Transverse colon (tissue), 4 donors: ENCODE measurements at regions of chr10 and their contacts with region 1.

Region 1: DNA sequence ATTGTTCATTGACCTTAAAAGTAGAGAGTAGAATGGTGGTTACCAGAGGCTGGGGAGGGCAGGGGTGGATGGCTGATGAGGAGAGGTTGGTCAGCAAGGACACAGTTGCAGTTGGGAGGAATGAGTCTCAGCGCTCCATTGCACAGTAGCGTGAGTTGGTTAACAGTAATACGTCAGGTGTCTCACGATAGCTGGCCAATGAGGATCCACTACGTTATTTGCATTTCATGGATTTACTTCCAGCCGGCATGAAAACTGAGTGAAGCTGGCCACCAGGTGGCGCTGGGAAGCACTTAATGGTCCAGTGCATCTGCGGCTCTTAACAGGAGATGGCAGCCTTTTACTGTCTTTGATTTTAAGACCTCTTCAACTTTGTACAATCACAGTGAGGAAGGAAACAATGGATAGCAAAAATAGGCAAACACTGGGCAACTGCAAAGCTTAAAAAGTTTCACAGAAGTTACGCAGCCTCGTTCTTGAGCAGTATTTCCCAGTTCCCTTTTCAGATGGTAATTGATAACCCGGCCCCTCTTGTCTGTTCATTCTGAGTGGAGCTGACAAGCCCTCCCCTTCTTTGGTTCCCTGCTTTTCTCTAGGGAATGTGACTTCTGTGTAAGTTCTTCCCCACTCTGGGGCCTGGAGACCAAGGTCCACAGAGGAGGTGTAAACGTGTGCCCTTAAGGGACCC is 23.7 kb downstream of the AKR1E2 start:
- DNase-seq: peak; percentile 93
- H3K4me3 ChIP-seq: no peak overlapping the region
- H3K27ac ChIP-seq: peak overlapping the region in 1 of 4 donors; percentile 8
- H3K4me1 ChIP-seq: peaks cover 0 to 8% (median 0%) of the 10 kb centered on the region in 4 donors
- H3K27me3 ChIP-seq: no peaks in the 10 kb centered on the region
- CTCF ChIP-seq: peak; percentile 94 to 100 (median 97)
- EP300 ChIP-seq: no peak
- POLR2A ChIP-seq: no peak

Region 2: GRCh38 chr10:5094265-5095205 is 244.8 kb after region 1 on chr10 and contains the start of gene AKR1C3:
- in situ Hi-C with region 1: loop called in 3 of 4 experiments (anchors 10 to 25 kb)
- intact Hi-C with region 1: loop called (anchors 5 kb)
- DNase-seq: no peak
- H3K4me3 ChIP-seq: peak within 1 kb of the TSS; percentile 13 to 59 (median 37)
- H3K27ac ChIP-seq: peak within 1 kb of the TSS; percentile 69 to 76 (median 74)
- H3K4me1 ChIP-seq: peaks cover 0 to 9% (median 0%) of the 10 kb centered on the region in 4 donors
- H3K27me3 ChIP-seq: no peaks in the 10 kb centered on the region
- CTCF ChIP-seq: peak; percentile 58 to 90 (median 69)
- EP300 ChIP-seq: no peak
- POLR2A ChIP-seq: peak; percentile 57
- total RNA-seq, gene AKR1C3: 164 to 634 (median 415) TPM

Region 3: GRCh38 chr10:5305374-5305773 is 455.7 kb after region 1 on chr10:
- in situ Hi-C with region 1: loop called in 1 of 4 experiments (anchors 10 kb)
- intact Hi-C with region 1: no loop called
- DNase-seq: no peak
- H3K4me3 ChIP-seq: no peak overlapping the region
- H3K27ac ChIP-seq: no peak overlapping the region
- H3K4me1 ChIP-seq: no peaks in the 10 kb centered on the region
- H3K27me3 ChIP-seq: no peaks in the 10 kb centered on the region
- CTCF ChIP-seq: no peak
- EP300 ChIP-seq: no peak
- POLR2A ChIP-seq: no peak

Region 4: GRCh38 chr10:5396556-5397300 is 547.0 kb after region 1 on chr10:
- in situ Hi-C with region 1: loop called in 1 of 4 experiments (anchors 25 kb)
- intact Hi-C with region 1: no loop called
- DNase-seq: no peak
- H3K4me3 ChIP-seq: no peak overlapping the region
- H3K27ac ChIP-seq: no peak overlapping the region
- H3K4me1 ChIP-seq: no peaks in the 10 kb centered on the region
- H3K27me3 ChIP-seq: no peaks in the 10 kb centered on the region
- CTCF ChIP-seq: no peak
- EP300 ChIP-seq: no peak
- POLR2A ChIP-seq: no peak

Region 5: GRCh38 chr10:5488309-5489167 is 638.8 kb after region 1 on chr10:
- in situ Hi-C with region 1: no loop called
- intact Hi-C with region 1: no loop called
- DNase-seq: peak; percentile 91
- H3K4me3 ChIP-seq: peak overlapping the region in 1 of 4 donors; percentile 12
- H3K27ac ChIP-seq: peak overlapping the region; percentile 91 to 95 (median 92)
- H3K4me1 ChIP-seq: peaks cover 0 to 17% (median 8%) of the 10 kb centered on the region in 4 donors
- H3K27me3 ChIP-seq: no peaks in the 10 kb centered on the region
- CTCF ChIP-seq: peak in 2 of 5 experiments; percentile 30 to 31
- EP300 ChIP-seq: peak; percentile 66
- POLR2A ChIP-seq: peak; percentile 82